ENCODE measurements at regions of chr4 and their contacts with region 1.

Region 1: GRCh38 chr4:77044461-77045150 is 31.2 kb downstream of the CCNI start:
- DNase-seq: no peak
- H3K4me3 ChIP-seq: no peak overlapping the region
- H3K27ac ChIP-seq: peak overlapping the region; percentile 43 to 44
- H3K4me1 ChIP-seq: peaks cover 5 to 7% of the 10 kb centered on the region in 2 experiments; a peak in 3 of 4 replicates
- H3K27me3 ChIP-seq: no peaks in the 10 kb centered on the region
- CTCF ChIP-seq: peak; percentile 83
- EP300 ChIP-seq: no peak
- RAD21 ChIP-seq: peak; percentile 62

Region 2: DNA sequence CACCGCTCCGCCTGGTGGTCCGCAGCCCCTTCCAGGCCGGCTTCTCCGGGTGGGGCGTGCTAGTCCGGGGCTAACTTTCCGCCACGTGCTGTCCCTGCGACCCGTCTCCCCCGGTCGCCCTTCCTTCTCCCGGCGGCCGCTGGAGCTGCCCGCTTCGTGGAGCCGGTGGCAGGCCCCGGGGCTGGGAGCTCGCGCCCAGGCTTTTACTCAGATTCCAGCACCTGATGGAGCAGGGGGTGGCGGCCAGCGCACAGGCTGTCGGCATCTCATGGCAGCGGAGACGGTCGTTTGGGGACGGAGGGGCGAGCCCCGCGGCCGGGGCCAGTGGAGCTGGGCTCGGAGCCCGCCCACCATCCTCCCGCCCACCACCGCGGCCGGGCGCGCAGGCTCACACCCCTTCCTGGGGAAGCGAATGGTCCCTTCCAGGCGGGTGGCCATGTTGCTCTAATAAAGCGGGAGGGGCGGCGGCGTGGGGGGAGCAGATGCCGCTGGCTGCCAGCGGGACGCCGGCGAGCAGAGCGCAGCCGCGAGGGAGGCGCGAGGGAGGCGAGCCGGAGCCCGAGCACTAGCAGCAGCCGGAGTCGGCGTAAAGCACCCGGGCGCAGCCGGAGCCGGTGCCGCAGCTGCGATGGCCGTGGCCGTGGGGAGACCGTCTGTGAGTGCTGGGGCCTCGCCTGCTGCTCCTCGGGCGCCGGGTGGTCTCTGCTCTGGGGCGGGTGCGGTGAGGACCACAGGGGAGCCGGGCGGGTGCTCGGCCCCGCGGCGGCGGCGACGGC is 95.1 kb before region 1 on chr4 and contains the start of gene SEPTIN11:
- CTCF ChIA-PET with region 1: interaction called, 10 read pairs
- POLR2A ChIA-PET with region 1: no interaction called
- DNase-seq: peak; percentile 97
- H3K4me3 ChIP-seq: peak within 1 kb of the TSS; percentile 94 to 95
- H3K27ac ChIP-seq: peak within 1 kb of the TSS; percentile 91 to 94
- H3K4me1 ChIP-seq: peaks cover 0 to 19% of the 10 kb centered on the region in 2 experiments; a peak in 3 of 4 replicates
- H3K27me3 ChIP-seq: no peaks in the 10 kb centered on the region
- CTCF ChIP-seq: peak; percentile 17; the same call in 1 of the 2 replicates
- EP300 ChIP-seq: peak in 1 of 2 experiments; percentile 57; a peak in 1 of 4 replicates
- RAD21 ChIP-seq: no peak
- polyA plus RNA-seq, gene SEPTIN11: 47.4 and 81.9 TPM in 2 replicates

Region 3: DNA sequence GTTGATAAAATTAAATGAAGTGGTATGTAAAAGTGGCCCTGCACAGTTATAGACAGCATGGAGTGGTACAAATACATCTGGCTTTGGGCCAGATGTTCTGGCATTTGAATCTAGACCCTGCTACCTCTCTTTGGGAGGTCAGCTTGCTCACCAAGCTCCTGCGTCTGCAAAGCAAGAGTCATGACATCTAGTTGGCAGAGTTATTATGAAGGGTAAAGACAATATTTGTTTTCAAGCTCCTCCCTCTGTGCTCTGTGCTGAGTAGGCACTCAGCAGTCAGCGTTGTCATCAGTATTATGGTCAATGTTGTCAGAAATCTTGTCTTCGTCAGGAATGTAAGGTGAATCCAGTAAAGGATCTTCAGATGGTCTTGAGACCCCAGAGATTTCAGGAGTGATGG is 24.6 kb before region 1 on chr4:
- CTCF ChIA-PET with region 1: interaction called, 10 read pairs
- POLR2A ChIA-PET with region 1: no interaction called
- DNase-seq: no peak
- H3K4me3 ChIP-seq: no peak overlapping the region
- H3K27ac ChIP-seq: 0 out of 4 replicates have a peak overlapping the region, but pooled peaks of 1 of the 2 experiments have one; percentile 73
- H3K4me1 ChIP-seq: peaks cover 9 to 20% of the 10 kb centered on the region in 2 experiments; a peak in 3 of 4 replicates
- H3K27me3 ChIP-seq: no peaks in the 10 kb centered on the region
- CTCF ChIP-seq: no peak
- EP300 ChIP-seq: no peak
- RAD21 ChIP-seq: no peak

Region 4: GRCh38 chr4:77031544-77031943 is 13.1 kb before region 1 on chr4:
- CTCF ChIA-PET with region 1: interaction called, 55 read pairs
- POLR2A ChIA-PET with region 1: no interaction called
- DNase-seq: no peak
- H3K4me3 ChIP-seq: no peak overlapping the region
- H3K27ac ChIP-seq: no peak overlapping the region; a peak in 2 of 4 replicates
- H3K4me1 ChIP-seq: no peaks in the 10 kb centered on the region; a peak in 1 of 4 replicates
- H3K27me3 ChIP-seq: no peaks in the 10 kb centered on the region
- CTCF ChIP-seq: no peak
- EP300 ChIP-seq: no peak
- RAD21 ChIP-seq: no peak

Region 5: DNA sequence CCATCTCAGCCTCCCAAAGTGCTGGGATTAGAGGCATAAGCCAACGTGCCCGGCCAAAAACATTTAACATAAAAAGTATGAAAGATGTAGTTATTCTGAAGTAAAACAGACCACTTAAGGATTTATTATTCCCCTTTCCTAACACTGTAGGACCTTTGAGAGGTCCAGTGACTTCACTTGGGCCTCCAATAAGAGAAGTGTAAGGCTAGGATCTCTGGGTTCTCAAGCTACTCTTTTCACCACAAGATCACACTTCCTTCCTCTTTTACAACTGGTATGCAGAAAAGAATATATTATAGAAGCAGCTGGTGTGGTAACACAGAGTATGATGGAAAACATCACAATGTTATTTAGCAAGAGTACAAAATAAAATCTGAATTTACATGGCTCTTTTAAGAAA is 82.2 kb after region 1 on chr4:
- CTCF ChIA-PET with region 1: no interaction called
- POLR2A ChIA-PET with region 1: no interaction called
- DNase-seq: no peak
- H3K4me3 ChIP-seq: no peak overlapping the region
- H3K27ac ChIP-seq: no peak overlapping the region
- H3K4me1 ChIP-seq: peaks cover 0 to 2% of the 10 kb centered on the region in 2 experiments; a peak in 1 of 4 replicates
- H3K27me3 ChIP-seq: no peaks in the 10 kb centered on the region; the same call in 1 of the 2 replicates
- CTCF ChIP-seq: no peak
- EP300 ChIP-seq: no peak
- RAD21 ChIP-seq: no peak

Measured in SK-N-SH (cell line).